A549 (cell line): ENCODE measurements at regions of chr11 and their contacts with region 1.

Region 1: DNA sequence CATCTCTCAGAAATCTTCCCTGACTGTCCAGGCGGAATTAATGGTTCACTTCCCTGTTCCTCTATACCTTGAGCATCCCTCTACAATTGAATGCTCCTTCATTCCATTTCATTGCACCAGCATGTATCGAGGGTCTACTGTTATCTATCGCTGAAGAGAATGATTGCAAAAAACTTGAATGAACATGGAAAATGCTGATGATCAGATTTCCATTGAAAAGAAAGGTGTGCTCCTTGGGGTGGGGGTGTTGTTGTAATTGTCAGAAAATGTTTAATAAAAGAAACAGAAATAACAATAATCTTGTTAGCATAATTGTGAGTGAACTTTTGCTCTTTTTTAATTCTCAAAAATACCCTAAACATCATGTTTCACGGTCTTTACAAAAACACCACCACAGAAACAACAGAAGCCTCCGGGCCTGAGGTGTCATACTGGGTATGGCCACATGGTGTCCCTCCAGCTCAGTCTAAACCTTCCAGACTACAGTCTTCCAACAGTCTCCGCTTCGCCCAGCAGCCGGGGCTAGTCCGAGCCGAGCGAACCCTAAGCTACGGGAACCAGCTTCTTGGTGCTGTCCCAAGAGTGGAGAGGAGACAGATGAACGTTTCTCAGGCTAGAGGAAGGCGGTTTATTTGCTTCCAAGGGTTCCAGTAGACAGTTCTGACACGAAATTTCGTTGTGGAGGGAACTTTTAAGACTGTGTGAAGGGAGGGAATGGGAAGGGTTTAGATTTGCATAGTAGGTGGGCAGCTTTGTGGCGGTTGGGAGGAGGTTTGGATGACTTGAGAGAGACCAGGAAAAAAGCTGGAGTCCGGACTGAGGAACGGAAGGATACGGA is 75.8 kb upstream of the ZBED5 start:
- DNase-seq: peak; percentile 90 to 93
- ATAC-seq: peak; percentile 75 to 86
- H3K4me3 ChIP-seq: peak overlapping the region; percentile 45
- H3K27ac ChIP-seq: peak overlapping the region; percentile 98
- H3K4me1 ChIP-seq: peaks cover 40% of the 10 kb centered on the region
- CTCF ChIP-seq: peak; percentile 97
- EP300 ChIP-seq: no peak
- POLR2A ChIP-seq: peak; percentile 18; the same call in 1 of the 2 replicates
- RAD21 ChIP-seq: peak; percentile 97 to 99

Region 2: GRCh38 chr11:10899121-10899830 is 34.4 kb before region 1 on chr11:
- CTCF ChIA-PET with region 1: interaction called, 10 read pairs
- POLR2A ChIA-PET with region 1: interaction called, 25 read pairs
- DNase-seq: no peak
- ATAC-seq: peak; percentile 67 to 74
- H3K4me3 ChIP-seq: no peak overlapping the region
- H3K27ac ChIP-seq: peak overlapping the region; percentile 87 to 93
- H3K4me1 ChIP-seq: peaks cover 62% of the 10 kb centered on the region
- CTCF ChIP-seq: no peak
- EP300 ChIP-seq: no peak
- POLR2A ChIP-seq: no peak
- RAD21 ChIP-seq: peak in 1 of 2 experiments; percentile 12; a peak in 3 of 5 replicates

Region 3: GRCh38 chr11:10982704-10983510 is 49.2 kb after region 1 on chr11:
- CTCF ChIA-PET with region 1: interaction called, 10 read pairs
- POLR2A ChIA-PET with region 1: no interaction called
- DNase-seq: peak in 1 of 2 experiments; percentile 44
- ATAC-seq: peak; percentile 43 to 82; a peak in 3 of 6 replicates
- H3K4me3 ChIP-seq: no peak overlapping the region
- H3K27ac ChIP-seq: peak overlapping the region; percentile 48 to 77; a peak in 5 of 6 replicates
- H3K4me1 ChIP-seq: peaks cover 14% of the 10 kb centered on the region
- CTCF ChIP-seq: no peak
- EP300 ChIP-seq: no peak
- POLR2A ChIP-seq: no peak
- RAD21 ChIP-seq: no peak

Region 4: GRCh38 chr11:11016068-11016467 is 82.4 kb after region 1 on chr11:
- CTCF ChIA-PET with region 1: interaction called, 78 read pairs
- POLR2A ChIA-PET with region 1: interaction called, 10 read pairs
- DNase-seq: no peak
- ATAC-seq: no peak
- H3K4me3 ChIP-seq: no peak overlapping the region
- H3K27ac ChIP-seq: no peak overlapping the region; a peak in 1 of 6 replicates
- H3K4me1 ChIP-seq: peaks cover under 1% of the 10 kb centered on the region; the same call in 1 of the 3 replicates
- CTCF ChIP-seq: no peak
- EP300 ChIP-seq: no peak
- POLR2A ChIP-seq: no peak
- RAD21 ChIP-seq: no peak

Region 5: DNA sequence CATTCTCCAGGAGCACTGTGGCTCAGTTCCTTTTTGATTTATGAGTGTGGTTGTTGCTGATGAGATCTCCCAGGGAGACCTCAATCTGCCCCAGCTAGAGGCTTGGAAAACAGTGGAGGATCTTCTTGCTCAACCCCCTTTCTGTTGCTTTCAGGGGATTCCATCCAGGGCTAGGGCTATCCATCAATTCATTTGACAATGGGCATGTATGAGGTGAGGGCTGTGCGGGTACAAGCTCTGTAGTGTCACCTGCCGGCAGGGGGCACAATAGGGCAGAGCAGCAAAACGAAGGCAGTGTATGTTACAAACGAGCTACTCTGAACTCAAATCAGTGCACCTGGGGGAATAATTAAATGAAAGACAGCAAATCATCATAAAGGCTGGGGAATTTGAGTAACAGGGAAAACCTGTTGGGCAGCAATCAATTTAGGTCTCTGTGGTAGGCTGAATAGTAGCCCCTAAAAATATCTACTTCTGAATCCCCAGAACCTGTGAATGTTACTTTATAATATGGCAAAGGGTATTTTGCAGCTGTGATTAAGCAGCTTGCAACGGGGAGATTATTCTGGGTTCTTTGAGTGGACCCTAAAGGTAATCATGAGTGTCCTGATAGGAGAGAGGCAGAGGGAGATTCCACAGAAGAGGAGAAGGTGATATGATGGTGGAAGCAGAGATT is 94.5 kb after region 1 on chr11:
- CTCF ChIA-PET with region 1: interaction called, 116 read pairs
- POLR2A ChIA-PET with region 1: interaction called, 9 read pairs
- DNase-seq: peak; percentile 44 to 65
- ATAC-seq: peak; percentile 90 to 97
- H3K4me3 ChIP-seq: no peak overlapping the region
- H3K27ac ChIP-seq: no peak overlapping the region
- H3K4me1 ChIP-seq: peaks cover 13% of the 10 kb centered on the region; the same call in 2 of the 3 replicates
- CTCF ChIP-seq: peak; percentile 85
- EP300 ChIP-seq: no peak
- POLR2A ChIP-seq: no peak
- RAD21 ChIP-seq: peak; percentile 82 to 90

Region 6: GRCh38 chr11:11069841-11070835 is 136.5 kb after region 1 on chr11:
- CTCF ChIA-PET with region 1: no interaction called
- POLR2A ChIA-PET with region 1: no interaction called
- DNase-seq: no peak
- ATAC-seq: no peak
- H3K4me3 ChIP-seq: no peak overlapping the region
- H3K27ac ChIP-seq: no peak overlapping the region
- H3K4me1 ChIP-seq: no peaks in the 10 kb centered on the region
- CTCF ChIP-seq: no peak
- EP300 ChIP-seq: no peak
- POLR2A ChIP-seq: no peak
- RAD21 ChIP-seq: no peak